Esophagus muscularis mucosa (tissue), 4 donors: ENCODE measurements at regions of chr10 and their contacts with region 1.

Region 1: GRCh38 chr10:92087750-92088395 is 164.3 kb downstream of the BTAF1 start:
- DNase-seq: no peak
- H3K4me3 ChIP-seq: no peak overlapping the region
- H3K27ac ChIP-seq: peak overlapping the region in 2 of 4 donors; percentile 11 to 27
- H3K4me1 ChIP-seq: peaks cover 21 to 37% (median 26%) of the 10 kb centered on the region in 4 donors
- H3K27me3 ChIP-seq: no peaks in the 10 kb centered on the region
- CTCF ChIP-seq: peak; percentile 65 to 81 (median 80)
- EP300 ChIP-seq: no peak
- POLR2A ChIP-seq: no peak

Region 2: DNA sequence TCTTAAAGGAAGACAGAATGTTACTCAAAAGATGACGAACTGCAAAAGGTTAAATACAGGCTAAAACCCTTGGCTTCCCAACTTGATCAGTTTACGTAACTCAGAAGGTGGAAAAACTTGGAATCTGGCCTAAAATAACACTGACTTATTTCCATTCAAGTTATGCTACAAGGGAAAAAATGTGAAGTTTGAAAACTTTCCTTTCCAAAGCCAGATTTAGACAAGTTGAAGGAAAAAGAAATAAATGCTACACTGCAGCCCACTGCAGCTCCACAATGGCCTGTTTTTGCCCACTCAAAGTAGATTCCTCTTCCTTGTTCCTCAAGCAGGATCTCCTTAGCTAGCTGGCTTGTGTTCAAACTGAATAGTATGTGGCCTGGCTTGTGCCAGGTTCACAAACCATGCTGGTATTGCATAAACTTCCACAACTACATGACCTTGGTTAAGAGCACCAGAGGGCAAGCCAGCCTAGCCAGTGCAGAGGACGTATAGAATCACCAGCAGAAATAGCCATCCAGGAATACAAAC is 36.8 kb after region 1 on chr10:
- intact Hi-C with region 1: no loop called
- DNase-seq: no peak
- H3K4me3 ChIP-seq: no peak overlapping the region
- H3K27ac ChIP-seq: peak overlapping the region; percentile 64 to 71 (median 68)
- H3K4me1 ChIP-seq: peaks cover 55 to 60% (median 55%) of the 10 kb centered on the region in 4 donors
- H3K27me3 ChIP-seq: no peaks in the 10 kb centered on the region
- CTCF ChIP-seq: no peak
- EP300 ChIP-seq: no peak
- POLR2A ChIP-seq: no peak

Region 3: GRCh38 chr10:92240289-92241157 is 152.7 kb after region 1 on chr10:
- intact Hi-C with region 1: loop called (anchors 2 kb)
- DNase-seq: no peak
- H3K4me3 ChIP-seq: peak overlapping the region; percentile 72 to 83 (median 76)
- H3K27ac ChIP-seq: peak overlapping the region; percentile 89 to 93 (median 93)
- H3K4me1 ChIP-seq: peaks cover 25 to 75% (median 62%) of the 10 kb centered on the region in 4 donors
- H3K27me3 ChIP-seq: no peaks in the 10 kb centered on the region
- CTCF ChIP-seq: no peak
- EP300 ChIP-seq: no peak
- POLR2A ChIP-seq: no peak

Region 4: DNA sequence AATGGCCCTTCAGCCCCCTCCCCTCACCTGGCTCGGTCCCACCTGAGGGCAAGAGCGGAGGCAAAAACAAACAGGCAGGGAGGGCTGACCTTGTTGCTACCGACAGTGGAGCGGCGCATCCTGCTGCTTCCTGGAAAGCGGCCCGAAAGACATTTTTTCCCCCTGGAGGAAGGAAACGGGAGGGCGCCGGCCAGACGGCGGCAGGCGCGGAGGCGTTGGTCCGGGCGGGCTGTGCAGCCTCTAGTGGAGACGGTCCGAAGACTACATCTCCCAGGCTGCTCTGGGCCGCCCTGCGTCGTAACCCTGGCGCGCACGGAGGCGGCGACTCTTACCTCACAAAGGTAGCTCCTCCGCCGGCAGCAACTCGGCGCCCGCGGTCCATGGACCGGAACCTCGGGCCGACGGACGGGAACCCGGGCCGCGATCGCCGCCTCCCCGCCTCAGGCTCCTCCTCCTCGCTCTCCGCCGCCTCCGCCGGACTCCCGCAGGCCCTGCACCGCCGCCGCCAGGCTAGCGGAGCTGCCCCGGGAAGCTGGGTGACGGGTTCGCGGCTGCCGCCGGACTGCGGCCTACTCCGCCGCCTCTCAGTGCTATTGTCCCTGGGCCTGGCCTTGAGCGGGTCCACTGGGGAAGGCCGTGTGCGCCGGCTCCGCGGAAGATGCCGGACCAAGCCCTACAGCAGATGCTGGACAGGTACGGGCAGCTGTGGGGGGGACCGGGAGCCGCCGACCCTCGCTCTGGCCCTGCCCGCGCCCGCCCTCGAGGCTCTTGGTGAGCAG is 203.2 kb after region 1 on chr10 and contains the starts of genes CPEB3 and MARCHF5:
- intact Hi-C with region 1: loop called (anchors 2 kb)
- DNase-seq: peak; percentile 98
- H3K4me3 ChIP-seq: peak within 1 kb of the TSS; percentile 83 to 97 (median 88)
- H3K27ac ChIP-seq: peak within 1 kb of the TSS; percentile 93 to 98 (median 94)
- H3K4me1 ChIP-seq: peaks cover 11 to 45% (median 35%) of the 10 kb centered on the region in 4 donors
- H3K27me3 ChIP-seq: no peaks in the 10 kb centered on the region
- CTCF ChIP-seq: peak; percentile 51 to 78 (median 60)
- EP300 ChIP-seq: peak; percentile 40
- POLR2A ChIP-seq: peak; percentile 56
- total RNA-seq, gene CPEB3: 6.8 to 11.0 (median 10.4) TPM
- total RNA-seq, gene MARCHF5: 12.3 to 18.5 (median 16.7) TPM

Region 5: GRCh38 chr10:92432596-92432995 is 344.7 kb after region 1 on chr10:
- intact Hi-C with region 1: loop called (anchors 2 kb)
- DNase-seq: no peak
- H3K4me3 ChIP-seq: no peak overlapping the region
- H3K27ac ChIP-seq: no peak overlapping the region
- H3K4me1 ChIP-seq: peaks cover 0 to 22% (median 0%) of the 10 kb centered on the region in 4 donors
- H3K27me3 ChIP-seq: no peaks in the 10 kb centered on the region
- CTCF ChIP-seq: no peak
- EP300 ChIP-seq: no peak
- POLR2A ChIP-seq: no peak